Colonic mucosa (tissue), 4 donors: ENCODE measurements at regions of chr17 and their contacts with region 1.

Region 1: GRCh38 chr17:56319517-56319916 is 166.2 kb downstream of the ANKFN1 start:
- DNase-seq: no peak
- H3K4me3 ChIP-seq: no peak overlapping the region
- H3K27ac ChIP-seq: no peak overlapping the region
- H3K4me1 ChIP-seq: no peaks in the 10 kb centered on the region
- H3K27me3 ChIP-seq: no peaks in the 10 kb centered on the region
- CTCF ChIP-seq: peak; percentile 48

Region 2: GRCh38 chr17:54544249-54544648 is 1775.3 kb before region 1 on chr17:
- intact Hi-C with region 1: no loop called
- DNase-seq: no peak
- H3K4me3 ChIP-seq: no peak overlapping the region
- H3K27ac ChIP-seq: no peak overlapping the region
- H3K4me1 ChIP-seq: no peaks in the 10 kb centered on the region
- H3K27me3 ChIP-seq: no peaks in the 10 kb centered on the region
- CTCF ChIP-seq: no peak

Region 3: DNA sequence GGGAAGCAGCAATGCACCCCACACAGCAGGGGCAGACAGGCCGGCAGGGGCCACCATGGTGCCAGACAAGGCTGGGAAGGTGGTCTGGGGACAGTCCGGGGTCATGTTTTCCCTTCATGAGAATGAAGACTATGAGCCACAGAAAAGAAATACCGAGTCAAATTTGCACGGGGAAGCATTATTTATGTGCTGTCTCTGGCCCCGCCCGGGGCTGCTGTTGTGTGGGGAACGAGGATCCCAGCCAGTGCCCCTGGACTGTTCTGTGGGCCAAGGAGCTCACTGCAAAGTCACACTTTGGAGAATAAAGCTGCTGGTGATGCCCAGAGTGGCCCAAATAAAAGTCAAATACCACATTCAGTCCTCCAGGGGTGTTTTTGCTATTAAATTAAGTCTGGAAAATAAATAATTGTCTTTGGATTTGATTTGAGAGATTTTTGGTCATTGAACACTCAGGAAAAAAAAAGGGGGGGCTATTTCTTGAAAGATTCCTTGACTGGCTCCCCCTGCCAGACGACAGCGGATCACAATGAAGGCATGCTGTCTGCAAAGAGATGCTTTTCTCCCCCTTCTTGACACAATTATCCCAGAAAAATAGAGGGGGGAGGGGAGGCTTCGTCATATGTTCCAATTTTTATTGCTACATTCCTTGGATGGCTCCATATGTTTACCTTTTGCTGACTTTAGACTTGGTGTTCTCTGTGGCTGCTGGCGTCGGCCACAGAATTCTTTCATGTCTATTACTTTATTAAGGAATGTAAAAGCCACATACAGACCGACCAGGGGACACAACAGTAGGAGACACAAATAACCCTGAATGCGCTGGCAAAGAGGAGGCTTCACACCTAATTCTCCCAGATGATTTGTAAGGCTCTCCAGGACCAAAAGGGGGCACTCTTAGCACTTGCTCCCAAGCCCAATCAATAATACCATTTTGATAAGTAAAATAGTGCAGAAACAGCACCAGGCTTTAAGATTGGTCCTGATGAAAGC is 193.4 kb before region 1 on chr17:
- intact Hi-C with region 1: loop called (anchors 10 kb)
- DNase-seq: no peak
- H3K4me3 ChIP-seq: no peak overlapping the region
- H3K27ac ChIP-seq: no peak overlapping the region
- H3K4me1 ChIP-seq: no peaks in the 10 kb centered on the region
- H3K27me3 ChIP-seq: no peaks in the 10 kb centered on the region
- CTCF ChIP-seq: no peak